Activated CD4-positive, alpha-beta memory T cell treated with anti-CD3 and anti-CD28 coated beads for 36 hours (primary cell): ENCODE measurements at regions of chr13 and their contacts with region 1.

Region 1: GRCh38 chr13:48155848-48156247 is 60.9 kb upstream of the MED4 start:
- DNase-seq: no peak
- H3K4me3 Mint-ChIP-seq: peak overlapping the region; percentile 64
- H3K27ac Mint-ChIP-seq: peak overlapping the region; percentile 95
- H3K4me1 Mint-ChIP-seq: peaks cover 84% of the 10 kb centered on the region
- H3K27me3 Mint-ChIP-seq: no peaks in the 10 kb centered on the region

Region 2: GRCh38 chr13:46295491-46296114 is 1860.2 kb before region 1 on chr13:
- CTCF ChIA-PET with region 1: no interaction called
- POLR2A ChIA-PET with region 1: no interaction called
- intact Hi-C with region 1: loop called (anchors 10 kb)
- DNase-seq: peak; percentile 78
- H3K4me3 Mint-ChIP-seq: peak overlapping the region; percentile 61
- H3K27ac Mint-ChIP-seq: peak overlapping the region; percentile 93
- H3K4me1 Mint-ChIP-seq: peaks cover 53% of the 10 kb centered on the region
- H3K27me3 Mint-ChIP-seq: no peaks in the 10 kb centered on the region

Region 3: GRCh38 chr13:48138270-48138669 is 17.6 kb before region 1 on chr13:
- CTCF ChIA-PET with region 1: interaction called, 4 read pairs
- POLR2A ChIA-PET with region 1: no interaction called
- intact Hi-C with region 1: loop called (anchors 1 kb)
- DNase-seq: peak; percentile 68
- H3K4me3 Mint-ChIP-seq: no peak overlapping the region
- H3K27ac Mint-ChIP-seq: no peak overlapping the region
- H3K4me1 Mint-ChIP-seq: peaks cover 10% of the 10 kb centered on the region
- H3K27me3 Mint-ChIP-seq: no peaks in the 10 kb centered on the region

Region 4: GRCh38 chr13:48210178-48210577 is 54.3 kb after region 1 on chr13:
- CTCF ChIA-PET with region 1: no interaction called
- POLR2A ChIA-PET with region 1: no interaction called
- intact Hi-C with region 1: loop called (anchors 1 kb)
- DNase-seq: no peak
- H3K4me3 Mint-ChIP-seq: no peak overlapping the region
- H3K27ac Mint-ChIP-seq: no peak overlapping the region
- H3K4me1 Mint-ChIP-seq: peaks cover 20% of the 10 kb centered on the region
- H3K27me3 Mint-ChIP-seq: peaks cover 9% of the 10 kb centered on the region

Region 5: DNA sequence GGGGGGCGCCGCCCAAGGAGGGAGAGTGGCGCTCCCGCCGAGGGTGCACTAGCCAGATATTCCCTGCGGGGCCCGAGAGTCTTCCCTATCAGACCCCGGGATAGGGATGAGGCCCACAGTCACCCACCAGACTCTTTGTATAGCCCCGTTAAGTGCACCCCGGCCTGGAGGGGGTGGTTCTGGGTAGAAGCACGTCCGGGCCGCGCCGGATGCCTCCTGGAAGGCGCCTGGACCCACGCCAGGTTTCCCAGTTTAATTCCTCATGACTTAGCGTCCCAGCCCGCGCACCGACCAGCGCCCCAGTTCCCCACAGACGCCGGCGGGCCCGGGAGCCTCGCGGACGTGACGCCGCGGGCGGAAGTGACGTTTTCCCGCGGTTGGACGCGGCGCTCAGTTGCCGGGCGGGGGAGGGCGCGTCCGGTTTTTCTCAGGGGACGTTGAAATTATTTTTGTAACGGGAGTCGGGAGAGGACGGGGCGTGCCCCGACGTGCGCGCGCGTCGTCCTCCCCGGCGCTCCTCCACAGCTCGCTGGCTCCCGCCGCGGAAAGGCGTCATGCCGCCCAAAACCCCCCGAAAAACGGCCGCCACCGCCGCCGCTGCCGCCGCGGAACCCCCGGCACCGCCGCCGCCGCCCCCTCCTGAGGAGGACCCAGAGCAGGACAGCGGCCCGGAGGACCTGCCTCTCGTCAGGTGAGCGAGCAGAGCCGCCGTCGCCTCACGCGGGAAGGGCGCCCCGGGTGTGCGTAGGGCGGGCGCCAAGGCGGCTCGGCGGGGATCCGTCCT is 147.7 kb after region 1 on chr13 and contains the start of gene RB1:
- CTCF ChIA-PET with region 1: no interaction called
- POLR2A ChIA-PET with region 1: no interaction called
- intact Hi-C with region 1: loop called (anchors 1 kb)
- DNase-seq: peak; percentile 94
- H3K4me3 Mint-ChIP-seq: peak within 1 kb of the TSS; percentile 97
- H3K27ac Mint-ChIP-seq: peak within 1 kb of the TSS; percentile 93
- H3K4me1 Mint-ChIP-seq: peaks cover 27% of the 10 kb centered on the region
- H3K27me3 Mint-ChIP-seq: no peaks in the 10 kb centered on the region
- total RNA-seq, gene RB1: 26.5 to 28.8 TPM